ENCODE measurements at regions of chr4 and their contacts with region 1.

Region 1: DNA sequence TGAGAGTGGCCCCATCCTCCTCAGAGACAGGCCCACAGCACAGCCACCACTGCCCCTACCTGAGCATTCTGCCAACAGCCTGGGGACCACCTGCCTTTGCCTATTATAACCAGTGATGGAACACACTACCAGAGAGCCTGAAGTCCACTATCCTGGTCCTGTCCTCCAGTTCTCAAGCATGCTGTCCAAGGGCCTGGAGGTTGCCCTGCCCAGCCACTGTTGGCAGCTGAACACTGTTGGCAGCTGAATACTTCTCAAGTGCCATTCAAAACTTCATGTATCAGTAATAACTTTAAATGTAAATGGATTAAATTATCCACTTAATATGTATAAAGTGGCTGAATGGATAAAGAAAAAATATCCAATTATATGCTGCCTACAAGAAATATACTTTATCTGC is 194.3 kb upstream of the JADE1 start:
- DNase-seq: no peak
- H3K4me3 ChIP-seq: no peak overlapping the region
- H3K27ac ChIP-seq: no peak overlapping the region
- H3K4me1 ChIP-seq: no peaks in the 10 kb centered on the region
- H3K27me3 ChIP-seq: no peaks in the 10 kb centered on the region
- CTCF ChIP-seq: no peak
- EP300 ChIP-seq: no peak
- POLR2A ChIP-seq: no peak

Region 2: DNA sequence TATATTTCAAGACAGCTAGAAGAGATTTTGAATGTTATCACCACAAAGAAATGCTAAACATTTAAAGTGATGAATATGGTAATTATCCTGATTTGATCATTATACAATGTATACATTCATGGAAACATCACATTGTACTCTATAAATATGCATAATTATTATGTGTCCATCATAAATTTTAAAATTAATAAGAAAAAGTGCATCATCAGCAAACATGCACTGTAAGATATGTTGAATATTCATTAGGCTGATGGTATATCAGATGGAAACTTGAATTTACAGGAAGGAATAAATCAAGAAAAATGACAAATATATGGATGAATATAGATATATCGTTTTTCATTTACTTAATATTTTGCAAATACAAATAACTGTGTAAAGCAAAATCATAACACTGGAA is 1794.6 kb before region 1 on chr4:
- in situ Hi-C with region 1: no loop called
- intact Hi-C with region 1: no loop called
- DNase-seq: no peak
- H3K4me3 ChIP-seq: no peak overlapping the region
- H3K27ac ChIP-seq: no peak overlapping the region
- H3K4me1 ChIP-seq: no peaks in the 10 kb centered on the region
- H3K27me3 ChIP-seq: no peaks in the 10 kb centered on the region
- CTCF ChIP-seq: no peak
- EP300 ChIP-seq: no peak
- POLR2A ChIP-seq: no peak

Region 3: GRCh38 chr4:127069675-127070074 is 1545.5 kb before region 1 on chr4:
- in situ Hi-C with region 1: no loop called
- intact Hi-C with region 1: no loop called
- DNase-seq: no peak
- H3K4me3 ChIP-seq: no peak overlapping the region
- H3K27ac ChIP-seq: no peak overlapping the region
- H3K4me1 ChIP-seq: no peaks in the 10 kb centered on the region
- H3K27me3 ChIP-seq: no peaks in the 10 kb centered on the region
- CTCF ChIP-seq: no peak
- EP300 ChIP-seq: no peak
- POLR2A ChIP-seq: no peak

Region 4: GRCh38 chr4:128600996-128601871 is 14.0 kb before region 1 on chr4:
- in situ Hi-C with region 1: no loop called
- intact Hi-C with region 1: loop called (anchors 1 kb)
- DNase-seq: peak; percentile 65
- H3K4me3 ChIP-seq: no peak overlapping the region
- H3K27ac ChIP-seq: peak overlapping the region; percentile 14 to 22 (median 17)
- H3K4me1 ChIP-seq: peaks cover 14 to 22% (median 18%) of the 10 kb centered on the region in 4 donors
- H3K27me3 ChIP-seq: no peaks in the 10 kb centered on the region
- CTCF ChIP-seq: no peak
- EP300 ChIP-seq: no peak
- POLR2A ChIP-seq: no peak

Measured in transverse colon (tissue), 4 donors.